SK-N-SH (cell line): ENCODE measurements at regions of chr11 and their contacts with region 1.

Region 1: DNA sequence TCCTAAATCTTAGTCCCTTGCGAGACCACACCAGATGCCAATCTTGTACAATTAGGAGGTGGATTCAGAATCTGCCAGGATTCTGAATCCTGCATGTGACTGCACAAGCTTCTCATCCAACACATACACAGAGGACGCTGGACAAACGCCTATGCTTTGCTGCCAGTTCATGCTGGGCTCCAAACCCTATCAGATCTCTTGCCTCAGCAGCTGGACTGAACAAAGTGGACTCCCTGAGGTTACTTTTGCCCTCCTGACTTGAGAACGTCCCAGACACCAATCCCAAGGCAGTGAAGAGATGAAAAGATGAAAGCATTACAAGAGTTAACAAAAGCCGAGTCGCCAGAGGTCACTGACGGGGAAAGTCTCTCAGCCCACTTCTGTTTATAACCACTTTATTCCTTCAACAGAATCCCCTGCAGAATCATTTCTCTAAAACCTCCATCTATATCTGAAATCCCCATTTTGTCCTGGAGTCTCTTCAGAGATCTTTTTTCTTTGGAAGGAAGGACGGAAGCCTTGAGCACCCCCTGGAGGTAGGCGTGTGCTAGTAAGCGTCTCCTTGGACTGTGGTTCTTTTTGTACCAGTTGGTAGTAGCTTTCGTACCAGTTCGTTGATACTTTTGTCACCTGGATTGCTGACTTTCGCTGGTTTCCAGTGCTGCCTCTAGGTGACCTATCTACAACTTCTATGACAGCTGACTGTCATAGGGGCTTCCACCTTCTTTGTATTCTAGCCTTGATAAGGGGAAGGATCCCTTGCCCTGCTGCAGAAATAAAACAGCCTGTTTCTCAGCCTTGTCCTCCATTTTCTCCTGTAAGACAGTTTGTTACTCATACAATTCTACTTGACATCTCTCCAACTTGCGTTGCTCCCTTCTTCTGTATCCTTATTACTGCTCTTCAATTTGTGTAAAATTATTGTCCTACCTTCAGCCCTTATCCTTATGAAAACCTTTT is 26.1 kb upstream of the EED start:
- DNase-seq: peak; percentile 70
- H3K4me3 ChIP-seq: peak overlapping the region in 1 of 2 experiments; percentile 28; a peak in 3 of 4 replicates
- H3K27ac ChIP-seq: no peak overlapping the region
- H3K4me1 ChIP-seq: peaks cover 0 to 5% of the 10 kb centered on the region in 2 experiments; a peak in 2 of 4 replicates
- H3K27me3 ChIP-seq: no peaks in the 10 kb centered on the region
- CTCF ChIP-seq: peak; percentile 92
- EP300 ChIP-seq: no peak
- RAD21 ChIP-seq: peak; percentile 89

Region 2: GRCh38 chr11:86056351-86056854 is 162.0 kb before region 1 on chr11:
- CTCF ChIA-PET with region 1: no interaction called
- POLR2A ChIA-PET with region 1: no interaction called
- DNase-seq: no peak
- H3K4me3 ChIP-seq: no peak overlapping the region
- H3K27ac ChIP-seq: no peak overlapping the region
- H3K4me1 ChIP-seq: peaks cover 0 to 3% of the 10 kb centered on the region in 2 experiments; a peak in 2 of 4 replicates
- H3K27me3 ChIP-seq: no peaks in the 10 kb centered on the region
- CTCF ChIP-seq: no peak; the same call in 1 of the 2 replicates
- EP300 ChIP-seq: no peak
- RAD21 ChIP-seq: no peak

Region 3: GRCh38 chr11:86162239-86162638 is 56.2 kb before region 1 on chr11:
- CTCF ChIA-PET with region 1: no interaction called
- POLR2A ChIA-PET with region 1: no interaction called
- DNase-seq: no peak
- H3K4me3 ChIP-seq: no peak overlapping the region
- H3K27ac ChIP-seq: peak overlapping the region; percentile 66 to 74
- H3K4me1 ChIP-seq: peaks cover 13 to 20% of the 10 kb centered on the region in 2 experiments
- H3K27me3 ChIP-seq: no peaks in the 10 kb centered on the region
- CTCF ChIP-seq: no peak
- EP300 ChIP-seq: peak in 1 of 2 experiments; percentile 64; a peak in 1 of 4 replicates
- RAD21 ChIP-seq: no peak

Region 4: DNA sequence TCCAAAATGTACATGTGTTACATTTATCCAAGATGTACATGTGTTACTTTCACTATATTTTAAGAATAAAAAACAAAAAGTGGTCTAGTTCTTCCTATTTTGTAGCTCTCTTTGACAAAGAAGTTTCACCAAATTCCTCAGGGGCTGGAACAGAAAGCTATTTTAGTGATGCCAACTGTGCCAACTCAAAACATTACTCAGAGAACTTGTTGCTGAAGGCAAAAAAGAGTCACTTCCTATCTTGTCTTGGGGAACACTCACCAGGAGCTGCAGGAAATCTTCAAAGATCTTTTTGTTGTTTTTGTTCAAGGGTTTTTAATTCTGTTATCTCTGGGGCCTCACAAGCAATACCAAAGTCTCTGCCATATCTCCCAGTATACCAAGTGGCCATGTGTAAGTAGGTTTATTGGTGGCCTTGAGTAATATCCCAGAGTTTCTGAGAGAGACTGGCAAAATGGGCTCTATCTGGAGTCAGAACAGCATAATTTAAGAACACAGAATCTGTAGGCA is 12.6 kb after region 1 on chr11:
- CTCF ChIA-PET with region 1: interaction called, 10 read pairs
- POLR2A ChIA-PET with region 1: no interaction called
- DNase-seq: no peak
- H3K4me3 ChIP-seq: no peak overlapping the region
- H3K27ac ChIP-seq: peak overlapping the region in 1 of 2 experiments; percentile 63; a peak in 2 of 4 replicates
- H3K4me1 ChIP-seq: peaks cover 0 to 9% of the 10 kb centered on the region in 2 experiments; a peak in 2 of 4 replicates
- H3K27me3 ChIP-seq: no peaks in the 10 kb centered on the region
- CTCF ChIP-seq: no peak
- EP300 ChIP-seq: no peak
- RAD21 ChIP-seq: no peak

Region 5: GRCh38 chr11:86302100-86302793 is 83.8 kb after region 1 on chr11 and contains the start of gene HIKESHI:
- CTCF ChIA-PET with region 1: no interaction called
- POLR2A ChIA-PET with region 1: no interaction called
- DNase-seq: peak; percentile 86
- H3K4me3 ChIP-seq: peak within 1 kb of the TSS; percentile 83 to 91
- H3K27ac ChIP-seq: peak within 1 kb of the TSS; percentile 79 to 87
- H3K4me1 ChIP-seq: peaks cover 4 to 16% of the 10 kb centered on the region in 2 experiments; a peak in 2 of 4 replicates
- H3K27me3 ChIP-seq: no peaks in the 10 kb centered on the region
- CTCF ChIP-seq: no peak
- EP300 ChIP-seq: peak in 1 of 2 experiments; percentile 54; a peak in 2 of 4 replicates
- RAD21 ChIP-seq: no peak
- polyA plus RNA-seq, gene HIKESHI: 62.3 and 67.6 TPM in 2 replicates